GM23248 (cell line): ENCODE measurements at regions of chr3 and their contacts with region 1.

Region 1: DNA sequence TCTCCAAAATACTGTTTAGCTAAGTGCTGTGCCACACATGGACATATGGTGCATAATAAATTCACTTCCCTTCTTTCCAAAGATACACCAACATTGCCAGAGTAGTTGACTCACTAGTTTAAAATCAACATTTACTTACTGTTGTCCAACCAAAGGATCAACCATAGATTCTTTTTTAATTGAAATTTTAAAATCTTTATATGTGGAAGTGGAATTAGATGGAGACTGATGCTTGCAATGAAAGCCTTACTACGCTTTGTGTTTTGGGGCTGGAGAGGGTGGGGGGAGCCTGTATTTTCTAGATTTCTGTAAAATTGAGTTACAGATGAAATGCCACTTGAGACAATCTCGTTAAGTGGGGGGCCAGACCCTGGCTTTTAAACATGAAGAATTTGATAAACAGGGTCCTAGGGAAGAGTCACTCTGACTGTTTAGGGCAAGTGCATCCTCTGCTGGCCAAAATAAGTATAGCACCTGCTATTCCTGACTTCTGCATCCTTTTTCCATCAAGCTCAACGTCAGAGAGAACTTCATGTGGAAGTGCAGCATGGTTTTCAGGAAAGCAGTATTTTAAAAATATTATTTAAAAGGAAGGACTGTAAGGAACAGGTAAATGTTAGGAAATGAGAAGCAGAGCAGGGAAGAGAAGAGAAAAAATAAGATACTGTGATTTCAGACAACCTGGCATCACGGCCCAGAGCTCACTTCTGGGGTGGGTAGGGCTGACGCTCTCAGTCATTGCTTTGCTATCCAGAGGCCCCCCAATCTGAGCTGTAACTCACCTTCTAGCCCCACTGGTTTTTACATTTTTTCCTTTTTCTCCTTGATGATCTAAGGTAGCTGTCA is 76.7 kb downstream of the BOC start:
- DNase-seq: peak; percentile 70
- H3K4me3 ChIP-seq: no peak overlapping the region
- H3K27ac ChIP-seq: peak overlapping the region; percentile 88
- H3K4me1 ChIP-seq: peaks cover 24% of the 10 kb centered on the region
- H3K27me3 ChIP-seq: no peaks in the 10 kb centered on the region

Region 2: GRCh38 chr3:113051302-113051711 is 236.7 kb before region 1 on chr3:
- in situ Hi-C with region 1: loop called (anchors 10 kb)
- DNase-seq: peak; percentile 91
- H3K4me3 ChIP-seq: peak overlapping the region; percentile 54
- H3K27ac ChIP-seq: no peak overlapping the region
- H3K4me1 ChIP-seq: peaks cover 7% of the 10 kb centered on the region
- H3K27me3 ChIP-seq: no peaks in the 10 kb centered on the region